Lower leg skin (tissue), 4 donors: ENCODE measurements at regions of chr4 and their contacts with region 1.

Region 1: GRCh38 chr4:57763070-57763612 is 653.0 kb upstream of the IGFBP7 start:
- DNase-seq: no peak
- H3K4me3 ChIP-seq: no peak overlapping the region
- CTCF ChIP-seq: no peak
- POLR2A ChIP-seq: no peak

Region 2: GRCh38 chr4:58499182-58499581 is 736.0 kb after region 1 on chr4:
- intact Hi-C with region 1: loop called (anchors 10 kb)
- DNase-seq: no peak
- H3K4me3 ChIP-seq: no peak overlapping the region
- CTCF ChIP-seq: no peak
- POLR2A ChIP-seq: no peak